Aorta (tissue), 5 donors: ENCODE measurements at regions of chr19 and their contacts with region 1.

Region 1: GRCh38 chr19:41310033-41310758 is at the start of gene CCDC97:
- DNase-seq: peak; percentile 91 to 96
- ATAC-seq: peak; percentile 93
- H3K4me3 ChIP-seq: peak within 1 kb of the TSS; percentile 67 to 88
- H3K27ac ChIP-seq: peak within 1 kb of the TSS; percentile 50 to 92
- H3K4me1 ChIP-seq: no peaks in the 10 kb centered on the region
- H3K27me3 ChIP-seq: no peaks in the 10 kb centered on the region
- total RNA-seq, gene CCDC97: 18.7 to 24.3 TPM

Region 2: DNA sequence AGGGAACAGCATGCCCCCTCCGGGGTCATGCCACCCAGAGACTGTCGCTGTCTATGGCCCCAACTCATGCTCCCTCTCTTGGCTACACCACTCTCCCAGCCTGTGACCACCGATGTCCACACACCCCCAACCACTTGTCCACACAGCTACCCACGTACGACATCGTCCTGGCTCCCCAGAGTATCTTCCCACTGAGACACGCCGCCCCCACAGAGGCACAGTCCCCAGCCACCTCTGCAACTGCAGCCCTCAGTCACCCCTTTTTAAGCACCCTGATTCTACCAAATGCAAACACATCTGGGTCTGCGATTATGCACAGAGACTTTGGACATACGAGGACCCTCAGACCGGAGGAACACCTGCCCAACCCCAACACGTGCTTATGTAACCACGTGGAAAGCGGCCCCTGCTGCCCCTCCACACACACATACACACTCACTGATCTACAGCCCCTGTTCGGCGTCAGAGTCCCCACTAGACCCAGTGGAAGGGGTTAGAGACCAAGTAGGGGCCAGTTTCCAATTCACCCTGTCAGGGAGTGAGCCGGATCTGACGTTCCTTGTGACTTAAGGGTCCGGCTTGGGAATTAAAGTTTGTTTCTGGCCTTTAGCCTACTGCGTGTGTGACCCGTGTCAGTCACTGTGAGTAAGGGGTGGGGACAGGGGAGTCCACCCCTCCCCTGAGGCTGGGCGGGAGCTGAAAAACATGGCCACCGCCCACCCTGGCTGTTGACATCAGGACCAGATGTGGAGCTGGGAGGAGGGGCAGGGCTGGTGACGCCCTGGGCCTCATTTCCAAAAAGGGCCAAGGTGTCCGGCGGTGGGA is 103.1 kb before region 1 on chr19:
- intact Hi-C with region 1: loop called (anchors 2 kb)
- DNase-seq: peak; percentile 86 to 90
- ATAC-seq: peak; percentile 83
- H3K4me3 ChIP-seq: no peak overlapping the region
- H3K27ac ChIP-seq: peak overlapping the region in 1 of 2 donors; percentile 11
- H3K4me1 ChIP-seq: no peaks in the 10 kb centered on the region
- H3K27me3 ChIP-seq: no peaks in the 10 kb centered on the region

Region 3: GRCh38 chr19:41263850-41264580 is 46.2 kb before region 1 on chr19 and contains the start of gene HNRNPUL1:
- intact Hi-C with region 1: loop called (anchors 2 to 5 kb)
- DNase-seq: peak; percentile 99
- ATAC-seq: peak; percentile 93
- H3K4me3 ChIP-seq: peak within 1 kb of the TSS; percentile 73 to 90
- H3K27ac ChIP-seq: peak within 1 kb of the TSS; percentile 91 to 100
- H3K4me1 ChIP-seq: no peaks in the 10 kb centered on the region
- H3K27me3 ChIP-seq: no peaks in the 10 kb centered on the region
- total RNA-seq, gene HNRNPUL1: 155 to 156 TPM

Region 4: GRCh38 chr19:41321600-41322270 is 11.5 kb after region 1 on chr19:
- intact Hi-C with region 1: loop called in 1 of 2 experiments (anchors 1 kb)
- DNase-seq: no peak
- ATAC-seq: peak; percentile 19
- H3K4me3 ChIP-seq: no peak overlapping the region
- H3K27ac ChIP-seq: peak overlapping the region in 1 of 2 donors; percentile 11
- H3K4me1 ChIP-seq: no peaks in the 10 kb centered on the region
- H3K27me3 ChIP-seq: no peaks in the 10 kb centered on the region

Region 5: GRCh38 chr19:41353466-41354342 is 43.5 kb after region 1 on chr19 and contains the start of gene TGFB1:
- intact Hi-C with region 1: loop called in 1 of 2 experiments (anchors 5 kb)
- DNase-seq: peak; percentile 96 to 97
- ATAC-seq: peak; percentile 91
- H3K4me3 ChIP-seq: peak within 1 kb of the TSS; percentile 34 to 77
- H3K27ac ChIP-seq: peak within 1 kb of the TSS in 1 of 2 donors; percentile 34
- H3K4me1 ChIP-seq: no peaks in the 10 kb centered on the region
- H3K27me3 ChIP-seq: no peaks in the 10 kb centered on the region
- total RNA-seq, gene TGFB1: 81.6 to 97.5 TPM

Region 6: GRCh38 chr19:41395355-41395754 is 85.2 kb after region 1 on chr19:
- intact Hi-C with region 1: no loop called
- DNase-seq: no peak
- ATAC-seq: no peak
- H3K4me3 ChIP-seq: no peak overlapping the region
- H3K27ac ChIP-seq: no peak overlapping the region
- H3K4me1 ChIP-seq: no peaks in the 10 kb centered on the region
- H3K27me3 ChIP-seq: no peaks in the 10 kb centered on the region